ENCODE measurements at regions of chr3 and their contacts with region 1.

Region 1: DNA sequence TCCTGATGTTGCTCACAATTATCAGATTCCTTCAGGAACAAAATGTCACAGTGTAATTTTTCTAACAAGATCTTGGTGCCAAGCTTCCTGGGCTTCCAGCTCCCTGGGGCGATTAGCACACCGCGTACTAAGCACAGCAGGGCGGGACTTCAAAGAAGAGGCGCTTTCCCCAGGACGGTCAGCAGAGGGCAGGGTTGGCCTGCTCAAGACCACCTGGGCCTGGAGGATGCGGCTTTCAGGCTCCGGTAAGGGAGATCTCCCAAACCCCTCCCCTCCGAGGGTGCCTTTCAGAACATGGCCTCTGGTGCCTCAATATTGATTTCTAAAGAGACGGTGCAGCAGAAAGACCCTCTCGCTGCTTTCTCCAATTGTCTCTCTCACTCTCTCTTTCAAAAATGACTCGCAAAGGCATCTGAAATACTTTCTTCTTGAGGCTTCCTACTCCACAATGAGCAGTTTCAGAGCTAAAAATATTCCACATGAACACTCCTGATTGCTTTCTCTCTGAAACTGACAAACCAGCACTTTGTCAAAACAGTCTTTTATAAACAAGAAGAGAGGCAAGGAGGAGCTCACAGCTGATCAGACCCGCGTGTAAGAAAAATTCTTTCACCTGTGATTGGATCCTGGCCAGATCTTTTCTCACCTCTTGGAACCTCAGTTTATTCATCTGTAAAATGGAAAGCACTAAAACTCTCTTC is 154.0 kb downstream of the ADAMTS9 start:
- DNase-seq: peak; percentile 82 to 86
- ATAC-seq: peak; percentile 94 to 97 (median 96)
- H3K4me3 ChIP-seq: peak overlapping the region in 3 of 10 donors; percentile 5 to 23 (median 17)
- H3K27ac ChIP-seq: peak overlapping the region in 5 of 10 donors; percentile 1 to 41 (median 26)
- H3K4me1 ChIP-seq: peaks cover 0 to 23% (median 11%) of the 10 kb centered on the region in 9 donors
- H3K27me3 ChIP-seq: no peaks in the 10 kb centered on the region
- CTCF ChIP-seq: peak; percentile 71 to 97 (median 88)

Region 2: GRCh38 chr3:64651741-64652241 is 118.0 kb after region 1 on chr3:
- intact Hi-C with region 1: loop called in 2 of 10 experiments (anchors 10 kb)
- DNase-seq: no peak
- ATAC-seq: peak in 3 of 8 donors; percentile 25 to 37 (median 27)
- H3K4me3 ChIP-seq: no peak overlapping the region
- H3K27ac ChIP-seq: peak overlapping the region in 4 of 10 donors; percentile 13 to 74 (median 58)
- H3K4me1 ChIP-seq: peaks cover 2 to 39% (median 18%) of the 10 kb centered on the region in 9 donors
- H3K27me3 ChIP-seq: no peaks in the 10 kb centered on the region
- CTCF ChIP-seq: no peak

Region 3: DNA sequence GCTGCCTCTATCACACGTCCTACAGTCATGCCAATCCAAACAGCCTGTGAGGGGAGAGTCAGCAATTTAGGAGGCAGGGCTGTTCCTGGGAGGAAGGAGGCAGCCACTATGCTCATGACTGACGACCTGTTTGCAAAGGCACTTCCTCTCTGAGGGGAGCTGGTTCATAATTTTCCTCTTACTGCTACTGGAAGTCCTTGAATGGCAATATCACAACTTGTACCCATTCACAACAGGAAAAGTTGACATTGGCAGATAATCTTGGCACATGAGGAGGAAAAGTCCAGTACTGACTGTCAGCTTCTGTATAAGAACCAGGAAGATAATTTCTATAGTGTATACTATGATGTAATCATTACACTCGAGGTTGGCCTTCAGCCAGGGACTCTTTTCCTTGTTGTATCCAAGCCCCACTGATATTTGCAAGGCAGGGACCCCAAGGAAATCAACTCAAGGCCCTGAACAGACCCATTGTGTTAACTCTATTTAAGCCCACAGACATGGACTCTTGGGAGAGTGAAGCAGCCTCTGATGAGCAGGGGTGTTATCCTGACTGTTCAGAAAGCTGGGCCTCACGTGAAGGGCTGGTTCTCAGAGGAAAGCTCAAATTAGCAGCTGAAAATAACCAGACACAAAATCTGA is 421.3 kb after region 1 on chr3:
- intact Hi-C with region 1: loop called in 1 of 10 experiments (anchors 10 kb)
- DNase-seq: peak in 1 of 2 donors; percentile 32
- ATAC-seq: peak in 7 of 8 donors; percentile 52 to 72 (median 65)
- H3K4me3 ChIP-seq: no peak overlapping the region
- H3K27ac ChIP-seq: peak overlapping the region in 6 of 10 donors; percentile 2 to 26 (median 12)
- H3K4me1 ChIP-seq: peaks cover 0 to 35% (median 0%) of the 10 kb centered on the region in 9 donors
- H3K27me3 ChIP-seq: no peaks in the 10 kb centered on the region
- CTCF ChIP-seq: no peak

Region 4: GRCh38 chr3:65245133-65246063 is 711.6 kb after region 1 on chr3:
- intact Hi-C with region 1: loop called (anchors 1 to 5 kb)
- DNase-seq: no peak
- ATAC-seq: peak in 4 of 8 donors; percentile 25 to 48 (median 42)
- H3K4me3 ChIP-seq: no peak overlapping the region
- H3K27ac ChIP-seq: no peak overlapping the region
- H3K4me1 ChIP-seq: peaks cover 0 to 11% (median 5%) of the 10 kb centered on the region in 9 donors
- H3K27me3 ChIP-seq: peaks cover 0 to 3% (median 0%) of the 10 kb centered on the region in 7 donors
- CTCF ChIP-seq: peak in 8 of 9 donors; percentile 27 to 71 (median 60)

Region 5: DNA sequence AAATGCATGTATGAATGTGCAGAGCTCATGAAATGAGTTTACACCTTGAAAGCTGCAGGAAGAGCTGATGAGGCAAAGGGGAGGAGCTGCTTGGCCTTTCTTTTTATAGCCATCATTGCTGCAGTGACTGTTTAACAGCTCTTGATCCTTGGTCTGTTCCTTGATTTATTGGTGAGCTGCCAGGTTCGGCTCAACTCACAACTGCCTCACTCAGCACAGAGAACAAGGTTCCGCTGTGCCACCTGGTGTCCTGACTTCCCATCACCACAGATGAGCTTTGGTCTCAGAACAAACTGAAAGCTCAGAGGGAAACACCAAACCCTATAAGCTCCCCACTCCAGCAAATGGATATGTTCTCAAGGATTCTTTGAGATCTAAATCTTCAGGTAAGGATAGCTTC is 878.8 kb after region 1 on chr3:
- intact Hi-C with region 1: loop called in 7 of 10 experiments (anchors 5 to 10 kb)
- DNase-seq: peak; percentile 40 to 87
- ATAC-seq: peak; percentile 79 to 95 (median 89)
- H3K4me3 ChIP-seq: no peak overlapping the region
- H3K27ac ChIP-seq: peak overlapping the region in 4 of 10 donors; percentile 67 to 80 (median 70)
- H3K4me1 ChIP-seq: peaks cover 14 to 61% (median 48%) of the 10 kb centered on the region in 9 donors
- H3K27me3 ChIP-seq: no peaks in the 10 kb centered on the region
- CTCF ChIP-seq: peak in 7 of 9 donors; percentile 27 to 70 (median 42)

Region 6: GRCh38 chr3:65672871-65673815 is 1139.4 kb after region 1 on chr3:
- intact Hi-C with region 1: loop called in 1 of 10 experiments (anchors 5 kb)
- DNase-seq: peak; percentile 55 to 70
- ATAC-seq: peak in 6 of 8 donors; percentile 25 to 76 (median 62)
- H3K4me3 ChIP-seq: no peak overlapping the region
- H3K27ac ChIP-seq: no peak overlapping the region
- H3K4me1 ChIP-seq: peaks cover 0 to 25% (median 9%) of the 10 kb centered on the region in 9 donors
- H3K27me3 ChIP-seq: no peaks in the 10 kb centered on the region
- CTCF ChIP-seq: peak; percentile 58 to 90 (median 83)

Measured in heart right ventricle (tissue), 16 donors.